ENCODE measurements at regions of chr7 and their contacts with region 1.

Region 1: GRCh38 chr7:18352339-18353255 is 143.0 kb upstream of the HDAC9 start:
- DNase-seq: peak; percentile 83
- H3K4me3 ChIP-seq: no peak overlapping the region
- H3K27ac ChIP-seq: no peak overlapping the region
- H3K4me1 ChIP-seq: peaks cover 11% of the 10 kb centered on the region
- H3K27me3 ChIP-seq: no peaks in the 10 kb centered on the region

Region 2: DNA sequence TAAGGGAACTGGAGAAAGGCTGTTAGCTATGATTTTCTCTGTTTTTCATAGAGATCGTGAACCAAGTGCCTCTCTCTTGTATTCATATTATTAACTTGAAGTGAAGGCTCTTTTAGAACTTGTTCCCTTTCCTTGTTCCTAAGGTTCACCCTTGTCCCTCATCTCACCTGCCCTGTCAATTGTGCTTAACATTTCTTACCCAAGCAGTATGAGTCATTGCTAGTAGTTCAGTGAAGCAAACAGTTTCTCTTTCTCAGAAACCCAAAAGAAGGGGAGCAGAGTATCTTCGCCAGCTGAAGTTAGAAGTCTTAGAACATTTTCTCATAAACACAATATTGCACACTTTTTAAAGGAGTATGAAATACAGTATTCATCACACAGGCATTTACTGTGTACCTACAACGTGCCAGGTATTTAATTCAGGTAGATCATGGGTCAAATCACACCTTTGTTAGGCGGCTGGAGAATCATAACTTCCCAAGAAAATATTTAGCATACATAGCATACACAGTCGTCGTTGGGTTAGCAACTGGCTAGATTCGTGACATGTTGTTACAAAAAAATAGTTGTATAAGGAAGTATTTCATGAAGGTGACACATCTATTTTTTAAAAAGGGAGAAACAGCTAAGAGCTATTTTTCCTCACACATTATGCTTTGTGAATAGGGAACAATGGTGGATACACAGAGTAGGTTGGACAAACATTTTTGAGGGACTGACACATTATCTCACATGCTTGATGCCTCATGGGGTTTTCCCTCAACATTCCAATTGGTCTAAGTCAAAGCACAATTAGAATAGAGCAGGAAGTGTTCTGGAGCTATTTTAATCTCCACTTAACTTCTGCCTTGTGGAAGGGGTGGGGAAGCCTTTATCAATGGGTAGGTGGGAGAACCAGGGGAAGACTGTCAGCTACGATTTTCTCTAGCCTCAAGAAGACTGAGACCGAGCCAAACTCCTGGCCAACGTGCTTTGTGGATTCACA is 156.1 kb after region 1 on chr7:
- in situ Hi-C with region 1: no loop called
- DNase-seq: peak; percentile 95
- H3K4me3 ChIP-seq: peak overlapping the region; percentile 65
- H3K27ac ChIP-seq: peak overlapping the region; percentile 96
- H3K4me1 ChIP-seq: peaks cover 55% of the 10 kb centered on the region
- H3K27me3 ChIP-seq: no peaks in the 10 kb centered on the region

Region 3: GRCh38 chr7:18570890-18571478 is 218.4 kb after region 1 on chr7:
- in situ Hi-C with region 1: loop called (anchors 10 kb)
- DNase-seq: peak; percentile 75
- H3K4me3 ChIP-seq: no peak overlapping the region
- H3K27ac ChIP-seq: no peak overlapping the region
- H3K4me1 ChIP-seq: no peaks in the 10 kb centered on the region
- H3K27me3 ChIP-seq: no peaks in the 10 kb centered on the region

Region 4: DNA sequence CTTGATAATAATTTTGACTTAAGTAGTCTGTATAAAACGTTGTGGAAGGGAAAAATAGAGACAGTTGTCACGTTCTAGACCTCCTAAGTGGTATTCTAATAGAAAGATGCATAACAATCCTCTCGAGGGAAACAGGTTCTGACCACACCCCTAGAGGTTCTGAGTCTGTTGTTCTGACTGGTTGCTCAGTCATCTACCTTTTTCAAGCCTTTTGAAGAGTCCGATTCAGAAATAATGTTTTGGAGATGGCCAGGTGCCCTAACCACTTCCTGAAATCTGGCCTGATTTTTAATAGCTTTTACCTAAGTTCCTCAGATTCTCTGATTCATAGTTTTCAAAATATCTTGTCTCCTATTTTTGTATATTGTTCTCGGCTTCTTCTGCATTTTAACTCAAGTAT is 318.6 kb after region 1 on chr7:
- in situ Hi-C with region 1: loop called (anchors 10 kb)
- DNase-seq: no peak
- H3K4me3 ChIP-seq: no peak overlapping the region
- H3K27ac ChIP-seq: no peak overlapping the region
- H3K4me1 ChIP-seq: peaks cover 15% of the 10 kb centered on the region
- H3K27me3 ChIP-seq: no peaks in the 10 kb centered on the region

Region 5: DNA sequence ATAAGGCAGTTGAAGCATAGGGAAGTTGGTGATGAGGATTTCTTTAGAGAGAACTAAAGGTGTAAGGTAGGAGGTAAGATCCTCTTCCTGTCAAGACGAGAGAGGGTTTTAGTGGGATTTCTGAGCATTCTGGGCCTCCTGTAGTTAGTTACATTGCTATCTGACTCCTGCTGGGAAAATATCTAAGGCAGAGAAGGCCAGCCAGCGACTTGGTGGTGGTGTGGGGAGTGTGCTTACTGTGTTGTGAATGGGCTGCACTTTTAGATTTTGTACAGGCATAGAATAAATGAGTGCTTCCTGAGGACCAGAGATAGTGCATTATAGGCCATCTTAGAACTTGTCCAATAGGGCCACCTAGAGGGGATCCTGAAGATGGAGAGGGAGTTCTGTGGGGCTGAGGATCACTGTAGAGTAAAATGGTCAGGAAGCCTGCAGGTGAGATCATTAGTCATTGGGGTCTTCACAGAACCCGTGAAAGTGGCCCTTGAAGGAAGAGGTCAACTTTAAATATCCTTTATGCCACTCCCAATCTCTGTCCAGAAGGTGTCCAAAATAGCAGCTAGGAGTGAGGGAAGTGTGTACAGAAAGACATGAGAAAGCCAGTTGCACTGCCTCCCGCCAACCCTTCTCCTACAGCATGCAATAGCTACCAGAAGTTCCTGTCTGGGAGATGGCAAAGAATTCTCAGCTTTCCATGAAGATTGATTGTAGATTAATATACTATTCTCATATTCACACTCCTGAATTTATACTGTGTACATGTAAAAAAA is 1089.6 kb after region 1 on chr7:
- in situ Hi-C with region 1: loop called (anchors 25 kb)
- DNase-seq: peak; percentile 76
- H3K4me3 ChIP-seq: no peak overlapping the region
- H3K27ac ChIP-seq: no peak overlapping the region
- H3K4me1 ChIP-seq: no peaks in the 10 kb centered on the region
- H3K27me3 ChIP-seq: no peaks in the 10 kb centered on the region

Region 6: DNA sequence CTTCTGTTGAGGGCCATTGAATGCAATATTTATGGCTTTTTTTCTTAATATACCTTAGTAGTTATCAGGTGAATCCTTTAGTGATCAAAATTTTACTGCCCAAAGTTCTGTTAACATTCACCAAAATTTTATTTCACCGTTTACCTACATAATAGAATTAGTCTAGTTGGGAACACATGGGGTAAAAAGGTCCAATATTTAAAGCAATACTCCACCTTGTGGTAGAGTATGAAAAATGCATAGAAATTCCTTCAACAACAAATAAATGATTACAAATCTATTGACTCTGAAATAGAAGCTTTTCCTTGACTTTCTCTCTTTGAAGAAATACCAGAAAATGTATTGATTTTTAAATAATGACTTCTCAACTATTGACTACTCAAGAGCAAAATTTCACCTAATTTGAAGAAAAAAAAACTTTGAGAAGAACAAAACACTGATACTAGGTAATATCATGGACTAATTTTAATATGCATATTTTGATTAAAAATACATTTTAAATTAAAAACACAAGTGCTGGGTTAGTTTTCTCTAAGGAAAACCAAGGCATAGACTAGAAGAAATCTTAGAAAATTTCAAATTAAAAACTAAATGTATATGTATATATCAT is 1312.9 kb after region 1 on chr7:
- in situ Hi-C with region 1: loop called (anchors 25 kb)
- DNase-seq: peak; percentile 58
- H3K4me3 ChIP-seq: no peak overlapping the region
- H3K27ac ChIP-seq: no peak overlapping the region
- H3K4me1 ChIP-seq: no peaks in the 10 kb centered on the region
- H3K27me3 ChIP-seq: no peaks in the 10 kb centered on the region